GM23248 (cell line): ENCODE measurements at regions of chr5 and their contacts with region 1.

Region 1: DNA sequence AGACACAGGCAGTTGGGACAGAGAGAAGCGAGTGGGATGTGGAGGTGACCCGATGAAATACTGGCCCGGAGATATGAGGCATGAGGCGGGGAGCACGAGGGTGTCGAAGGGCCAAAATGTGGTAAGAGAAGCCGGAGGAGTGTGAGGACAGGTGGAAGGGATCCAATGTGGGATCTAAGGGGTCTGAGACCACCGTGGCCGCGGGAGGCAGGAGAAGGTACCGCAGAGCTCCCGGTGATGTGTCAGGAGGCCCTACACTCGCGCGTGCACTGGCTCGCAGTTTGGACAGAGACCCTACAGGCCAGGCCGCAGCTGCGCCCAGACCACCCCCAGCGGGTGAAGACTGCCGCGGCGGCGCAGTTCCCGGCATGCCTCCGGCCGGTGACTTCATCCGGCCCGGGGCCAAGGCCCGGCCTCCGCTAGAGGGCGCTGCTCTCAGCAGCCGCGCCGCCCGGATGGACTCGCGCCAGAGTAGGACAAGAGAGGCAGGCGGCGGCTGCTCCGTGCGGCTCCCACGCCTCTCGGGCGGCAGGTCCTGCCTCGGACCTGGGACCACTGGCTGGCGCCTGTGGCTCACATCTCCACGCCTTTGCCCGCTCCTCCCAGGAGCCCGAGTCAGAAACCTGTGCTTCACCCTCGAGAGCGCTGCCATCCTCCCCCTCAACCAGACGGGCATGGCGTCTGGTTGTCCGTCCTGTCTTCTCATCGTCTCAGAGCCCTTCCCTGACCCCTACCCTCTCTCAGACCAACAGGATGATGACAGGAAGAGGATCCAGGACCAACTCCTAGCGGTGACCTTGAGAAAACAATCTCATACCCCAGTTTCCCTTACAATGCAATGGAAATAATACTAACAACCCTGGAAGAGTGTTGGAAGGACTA is 35.4 kb upstream of the STING1 start:
- DNase-seq: peak; percentile 94
- H3K4me3 ChIP-seq: peak overlapping the region; percentile 76
- H3K27ac ChIP-seq: peak overlapping the region; percentile 49
- H3K4me1 ChIP-seq: no peaks in the 10 kb centered on the region
- H3K27me3 ChIP-seq: no peaks in the 10 kb centered on the region

Region 2: GRCh38 chr5:139137702-139138101 is 380.2 kb before region 1 on chr5:
- in situ Hi-C with region 1: no loop called
- DNase-seq: peak; percentile 30
- H3K4me3 ChIP-seq: no peak overlapping the region
- H3K27ac ChIP-seq: no peak overlapping the region
- H3K4me1 ChIP-seq: peaks cover 38% of the 10 kb centered on the region
- H3K27me3 ChIP-seq: no peaks in the 10 kb centered on the region

Region 3: GRCh38 chr5:139422307-139422893 is 95.5 kb before region 1 on chr5:
- in situ Hi-C with region 1: loop called (anchors 10 kb)
- DNase-seq: peak; percentile 82
- H3K4me3 ChIP-seq: no peak overlapping the region
- H3K27ac ChIP-seq: no peak overlapping the region
- H3K4me1 ChIP-seq: 0 out of 2 replicates have a peak, but pooled peaks cover 4% of the 10 kb centered on the region
- H3K27me3 ChIP-seq: no peaks in the 10 kb centered on the region

Region 4: GRCh38 chr5:139725073-139725830 is 207.3 kb after region 1 on chr5:
- in situ Hi-C with region 1: no loop called
- DNase-seq: peak; percentile 93
- H3K4me3 ChIP-seq: no peak overlapping the region
- H3K27ac ChIP-seq: peak overlapping the region; percentile 45
- H3K4me1 ChIP-seq: peaks cover 12% of the 10 kb centered on the region
- H3K27me3 ChIP-seq: no peaks in the 10 kb centered on the region